Activated T-helper 1 cell treated with anti-CD3 and anti-CD28 coated beads, Interleukin-12 subunit alpha, Interleukin-12 subunit beta, Interleukin-2, Interleukin-4 antibody, amounts not matched to agents 30 ng/mL and 10 ng/mL and 1 ng/mL, durations not matched to agents 14 hours and 24 hours and 36 hours (primary cell): ENCODE measurements at regions of chr19 and their contacts with region 1.

Region 1: GRCh38 chr19:12294249-12295158 is at the start of gene ZNF44:
- DNase-seq: peak; percentile 95
- H3K4me3 Mint-ChIP-seq: peak within 1 kb of the TSS; percentile 100
- H3K27ac Mint-ChIP-seq: peak within 1 kb of the TSS; percentile 99
- H3K4me1 Mint-ChIP-seq: peaks cover 34% of the 10 kb centered on the region
- H3K27me3 Mint-ChIP-seq: no peaks in the 10 kb centered on the region
- total RNA-seq, gene ZNF44: 7.4 and 10.3 TPM in 2 replicates

Region 2: GRCh38 chr19:12162882-12163806 is 131.4 kb before region 1 on chr19 and contains the start of gene ZNF136:
- intact Hi-C with region 1: loop called (anchors 1 kb)
- DNase-seq: peak; percentile 90
- H3K4me3 Mint-ChIP-seq: peak within 1 kb of the TSS; percentile 94
- H3K27ac Mint-ChIP-seq: peak within 1 kb of the TSS; percentile 93
- H3K4me1 Mint-ChIP-seq: peaks cover 28% of the 10 kb centered on the region
- H3K27me3 Mint-ChIP-seq: no peaks in the 10 kb centered on the region
- total RNA-seq, gene ZNF136: 10.1 and 10.8 TPM in 2 replicates

Region 3: GRCh38 chr19:12365236-12366162 is 71.0 kb after region 1 on chr19 and contains the start of gene ZNF442:
- intact Hi-C with region 1: loop called (anchors 1 kb)
- DNase-seq: peak; percentile 58
- H3K4me3 Mint-ChIP-seq: peak within 1 kb of the TSS; percentile 91
- H3K27ac Mint-ChIP-seq: peak within 1 kb of the TSS; percentile 67
- H3K4me1 Mint-ChIP-seq: peaks cover 10% of the 10 kb centered on the region
- H3K27me3 Mint-ChIP-seq: peaks cover 2% of the 10 kb centered on the region
- total RNA-seq, gene ZNF442: 0.39 and 0.47 TPM in 2 replicates

Region 4: GRCh38 chr19:12440541-12441316 is 146.2 kb after region 1 on chr19 and contains the start of gene ZNF443:
- intact Hi-C with region 1: loop called (anchors 1 kb)
- DNase-seq: peak; percentile 98
- H3K4me3 Mint-ChIP-seq: peak within 1 kb of the TSS; percentile 100
- H3K27ac Mint-ChIP-seq: peak within 1 kb of the TSS; percentile 95
- H3K4me1 Mint-ChIP-seq: no peaks in the 10 kb centered on the region
- H3K27me3 Mint-ChIP-seq: no peaks in the 10 kb centered on the region
- total RNA-seq, gene ZNF443: 3.8 TPM in 2 replicates